GM12878 (cell line): ENCODE measurements at regions of chr22 and their contacts with region 1.

Region 1: GRCh38 chr22:21573750-21574494 is 6.4 kb downstream of the UBE2L3 start:
- DNase-seq: no peak
- ATAC-seq: no peak
- H3K4me3 ChIP-seq: no peak overlapping the region
- H3K27ac ChIP-seq: no peak overlapping the region
- H3K4me1 ChIP-seq: peaks cover 11% of the 10 kb centered on the region
- H3K27me3 ChIP-seq: no peaks in the 10 kb centered on the region
- CTCF ChIP-seq: no peak
- EP300 ChIP-seq: no peak
- POLR2A ChIP-seq: no peak
- RAD21 ChIP-seq: no peak

Region 2: GRCh38 chr22:21587803-21588611 is 14.1 kb after region 1 on chr22:
- CTCF ChIA-PET with region 1: interaction called, 6 read pairs
- POLR2A ChIA-PET with region 1: interaction called, 14 read pairs
- RAD21 ChIA-PET with region 1: interaction called, 8 read pairs
- SMC1A ChIA-PET with region 1: interaction called, 10 read pairs
- in situ Hi-C with region 1: no loop called
- intact Hi-C with region 1: loop called (anchors 2 kb)
- DNase-seq: peak; percentile 78
- ATAC-seq: peak; percentile 98
- H3K4me3 ChIP-seq: peak overlapping the region; percentile 41; the same call in 1 of the 2 replicates
- H3K27ac ChIP-seq: peak overlapping the region; percentile 49
- H3K4me1 ChIP-seq: peaks cover 26% of the 10 kb centered on the region
- H3K27me3 ChIP-seq: no peaks in the 10 kb centered on the region
- CTCF ChIP-seq: no peak
- EP300 ChIP-seq: peak in 1 of 2 experiments; percentile 80; a peak in 2 of 4 replicates
- POLR2A ChIP-seq: no peak
- RAD21 ChIP-seq: no peak

Region 3: GRCh38 chr22:21791635-21792625 is 218.0 kb after region 1 on chr22:
- CTCF ChIA-PET with region 1: no interaction called
- POLR2A ChIA-PET with region 1: no interaction called
- RAD21 ChIA-PET with region 1: no interaction called
- SMC1A ChIA-PET with region 1: no interaction called
- in situ Hi-C with region 1: no loop called
- intact Hi-C with region 1: no loop called
- DNase-seq: peak; percentile 62
- ATAC-seq: peak; percentile 96
- H3K4me3 ChIP-seq: no peak overlapping the region
- H3K27ac ChIP-seq: no peak overlapping the region
- H3K4me1 ChIP-seq: peaks cover 8% of the 10 kb centered on the region
- H3K27me3 ChIP-seq: no peaks in the 10 kb centered on the region
- CTCF ChIP-seq: 0 out of 6 replicates have a peak, but pooled peaks of 2 of the 3 experiments have one; percentile 7
- EP300 ChIP-seq: peak in 1 of 2 experiments; percentile 43; a peak in 1 of 4 replicates
- POLR2A ChIP-seq: no peak
- RAD21 ChIP-seq: 0 out of 2 replicates have a peak, but pooled peaks have one; percentile 1